SK-N-SH (cell line): ENCODE measurements at regions of chr6 and their contacts with region 1.

Region 1: GRCh38 chr6:115997990-115998585 is 62.6 kb downstream of the FRK start:
- DNase-seq: no peak
- H3K4me3 ChIP-seq: no peak overlapping the region
- H3K27ac ChIP-seq: no peak overlapping the region
- H3K4me1 ChIP-seq: no peaks in the 10 kb centered on the region
- H3K27me3 ChIP-seq: no peaks in the 10 kb centered on the region
- CTCF ChIP-seq: no peak
- EP300 ChIP-seq: no peak
- RAD21 ChIP-seq: no peak

Region 2: GRCh38 chr6:116010790-116011401 is 12.8 kb after region 1 on chr6:
- CTCF ChIA-PET with region 1: interaction called, 10 read pairs
- POLR2A ChIA-PET with region 1: no interaction called
- DNase-seq: peak; percentile 40
- H3K4me3 ChIP-seq: no peak overlapping the region
- H3K27ac ChIP-seq: no peak overlapping the region
- H3K4me1 ChIP-seq: peaks cover 0 to 3% of the 10 kb centered on the region in 2 experiments; a peak in 1 of 4 replicates
- H3K27me3 ChIP-seq: no peaks in the 10 kb centered on the region
- CTCF ChIP-seq: peak; percentile 90
- EP300 ChIP-seq: no peak
- RAD21 ChIP-seq: peak; percentile 77

Region 3: GRCh38 chr6:116100419-116101301 is 102.6 kb after region 1 on chr6 and contains the start of gene NT5DC1:
- CTCF ChIA-PET with region 1: no interaction called
- POLR2A ChIA-PET with region 1: no interaction called
- DNase-seq: peak; percentile 95
- H3K4me3 ChIP-seq: peak within 1 kb of the TSS; percentile 71 to 95
- H3K27ac ChIP-seq: peak within 1 kb of the TSS; percentile 79 to 92
- H3K4me1 ChIP-seq: peaks cover under 1 to 16% of the 10 kb centered on the region in 2 experiments; a peak in 3 of 4 replicates
- H3K27me3 ChIP-seq: no peaks in the 10 kb centered on the region
- CTCF ChIP-seq: peak; percentile 43
- EP300 ChIP-seq: no peak
- RAD21 ChIP-seq: no peak; the same call in 1 of the 2 replicates
- polyA plus RNA-seq, gene NT5DC1: 20.3 and 21.0 TPM in 2 replicates

Region 4: DNA sequence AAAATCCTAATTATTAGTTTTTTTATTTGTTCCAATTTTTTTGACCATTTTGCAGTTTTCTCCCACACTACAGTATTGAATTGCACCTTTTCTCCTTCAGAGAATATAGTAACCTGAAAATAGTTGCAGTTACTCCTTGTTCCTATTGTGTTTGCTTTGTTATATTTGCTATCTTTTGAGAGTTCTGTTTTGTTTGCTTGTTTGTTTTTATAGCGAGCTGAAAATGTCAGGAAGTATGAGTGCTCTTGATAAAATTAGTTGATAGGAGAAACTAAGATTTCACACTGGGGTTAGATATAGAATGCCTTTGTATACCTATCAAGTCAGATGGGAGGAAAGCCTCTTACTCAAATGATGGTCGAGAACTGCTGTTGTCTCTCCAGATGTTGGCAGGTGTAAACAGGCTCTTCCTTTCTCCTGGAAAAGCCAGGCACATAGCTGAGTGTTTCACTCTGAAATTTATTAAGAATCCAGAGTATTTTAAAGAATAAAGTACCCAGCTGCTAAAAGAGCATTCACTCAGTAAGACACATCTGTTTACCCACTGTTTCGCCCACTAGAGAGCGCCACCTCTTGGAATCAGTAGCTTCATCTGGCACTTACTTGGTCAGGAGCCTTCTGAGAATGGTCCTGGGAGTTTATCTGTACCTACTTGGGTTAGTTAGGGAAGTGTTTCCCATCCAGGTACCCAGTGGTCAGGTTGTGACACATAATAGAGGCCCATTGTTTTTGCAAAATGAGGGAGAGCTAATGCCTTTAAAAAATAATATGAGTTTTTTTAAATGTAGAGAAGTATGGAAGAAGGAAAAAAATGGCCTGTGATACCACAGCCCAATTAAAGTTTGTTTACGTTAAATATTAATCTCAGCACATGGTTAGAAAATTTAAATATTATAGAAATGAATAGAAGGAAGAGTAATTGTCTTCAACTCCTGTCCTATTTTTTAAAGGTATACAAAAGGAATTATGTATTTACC is 113.8 kb after region 1 on chr6:
- CTCF ChIA-PET with region 1: no interaction called
- POLR2A ChIA-PET with region 1: no interaction called
- DNase-seq: peak; percentile 26
- H3K4me3 ChIP-seq: no peak overlapping the region; a peak in 1 of 4 replicates
- H3K27ac ChIP-seq: no peak overlapping the region
- H3K4me1 ChIP-seq: peaks cover 1 to 5% of the 10 kb centered on the region in 2 experiments; a peak in 2 of 4 replicates
- H3K27me3 ChIP-seq: no peaks in the 10 kb centered on the region
- CTCF ChIP-seq: peak; percentile 66
- EP300 ChIP-seq: no peak
- RAD21 ChIP-seq: peak; percentile 48